ENCODE measurements at regions of chr15 and their contacts with region 1.

Region 1: DNA sequence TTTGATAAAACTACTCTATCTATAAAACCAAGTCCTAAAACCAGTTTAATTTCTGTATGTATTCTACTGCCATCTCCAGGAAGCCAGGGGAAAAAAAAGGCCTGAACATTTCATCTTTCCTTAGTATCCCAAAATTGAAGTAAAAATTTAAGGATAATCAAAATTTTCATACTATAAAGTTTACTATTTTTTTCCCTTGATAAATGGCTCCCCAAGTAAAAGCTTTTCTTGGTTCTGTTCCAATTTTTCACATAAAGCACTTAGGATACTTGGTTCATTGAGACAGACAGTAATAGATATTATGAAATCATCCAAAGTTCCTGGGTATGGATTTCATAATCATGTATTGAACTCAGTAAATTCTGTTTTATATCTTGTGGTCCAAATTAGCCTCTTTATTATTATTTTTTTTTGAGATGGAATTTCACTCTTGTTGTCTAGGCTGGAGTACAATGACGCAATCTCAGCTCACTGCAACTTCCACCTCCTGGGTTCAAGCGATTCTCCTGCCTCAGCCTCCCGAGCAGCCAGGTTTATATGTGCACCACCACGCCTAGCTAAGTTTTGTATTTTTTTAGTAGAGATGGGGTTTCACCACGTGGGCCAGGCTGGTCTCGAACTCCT is 34.5 kb downstream of the ICE2 start:
- DNase-seq: no peak
- H3K4me3 ChIP-seq: no peak overlapping the region
- H3K27ac ChIP-seq: no peak overlapping the region
- H3K27me3 ChIP-seq: no peaks in the 10 kb centered on the region
- CTCF ChIP-seq: peak; percentile 74

Region 2: DNA sequence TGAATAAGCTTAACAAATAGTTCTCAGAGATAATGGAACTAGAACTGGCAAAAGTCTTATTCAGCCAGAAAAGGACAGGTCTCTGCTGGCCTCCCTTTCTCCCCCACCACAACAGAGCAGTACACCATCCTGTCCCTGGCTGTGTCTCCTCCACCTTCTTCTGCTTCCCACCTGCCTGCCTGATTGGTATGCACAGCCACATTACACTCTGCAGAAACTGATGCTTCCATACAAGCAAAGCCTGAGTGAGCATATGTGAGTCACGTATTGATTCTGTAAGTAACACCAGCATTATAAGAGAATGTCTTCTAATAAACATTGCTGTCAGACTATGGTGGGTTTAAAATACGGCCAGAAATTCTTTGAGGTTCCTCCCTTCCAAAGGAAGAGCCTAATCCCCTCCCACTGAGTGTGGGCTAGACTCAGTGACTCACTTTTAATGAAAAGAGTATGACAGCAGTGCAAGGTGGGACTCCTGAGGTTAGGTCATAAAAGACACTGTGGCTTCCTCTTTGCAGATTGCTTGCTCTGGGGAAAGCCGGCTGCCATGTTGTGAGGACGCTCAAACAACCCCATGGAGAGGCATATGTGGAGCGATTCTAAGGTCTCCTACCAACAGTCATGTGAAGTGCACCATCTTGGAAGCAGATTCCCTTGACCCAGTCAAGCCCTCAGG is 91.0 kb before region 1 on chr15:
- CTCF ChIA-PET with region 1: interaction called, 111 read pairs
- POLR2A ChIA-PET with region 1: no interaction called
- DNase-seq: no peak
- H3K4me3 ChIP-seq: no peak overlapping the region
- H3K27ac ChIP-seq: no peak overlapping the region
- H3K27me3 ChIP-seq: no peaks in the 10 kb centered on the region
- CTCF ChIP-seq: no peak

Region 3: DNA sequence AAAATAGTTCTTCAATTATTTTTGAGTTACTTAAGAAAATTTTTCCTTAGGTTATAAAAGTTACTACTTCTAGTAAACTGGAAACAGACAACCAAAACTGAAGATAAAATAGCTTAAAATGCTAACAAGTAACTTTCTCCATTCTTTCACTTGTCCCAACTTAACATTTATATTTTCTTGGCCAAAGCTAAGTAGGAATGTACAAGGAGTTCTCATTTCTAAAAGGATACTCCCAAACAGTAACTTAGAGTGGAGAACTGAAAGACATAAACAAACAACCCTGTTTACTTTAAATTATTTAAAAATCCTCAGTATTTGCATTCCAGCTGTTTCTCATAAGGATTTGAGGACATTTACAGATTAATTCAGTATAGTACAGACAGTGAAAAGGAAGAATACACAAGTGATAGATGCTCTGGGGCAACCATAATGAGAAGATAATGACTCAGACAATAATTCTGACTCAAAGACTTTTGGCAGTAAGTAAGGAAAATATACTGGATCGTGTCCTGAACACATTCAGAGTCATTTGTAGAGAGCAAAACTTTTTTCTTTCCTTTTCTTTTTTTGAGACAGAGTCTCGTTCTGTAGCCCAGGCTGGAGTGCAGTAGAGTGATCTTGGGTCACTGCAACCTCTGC is 17.4 kb before region 1 on chr15:
- CTCF ChIA-PET with region 1: interaction called, 12 read pairs
- POLR2A ChIA-PET with region 1: no interaction called
- DNase-seq: no peak
- H3K4me3 ChIP-seq: no peak overlapping the region
- H3K27ac ChIP-seq: no peak overlapping the region
- H3K27me3 ChIP-seq: no peaks in the 10 kb centered on the region
- CTCF ChIP-seq: no peak

Region 4: GRCh38 chr15:60454824-60455223 is 10.4 kb after region 1 on chr15:
- CTCF ChIA-PET with region 1: interaction called, 10 read pairs
- POLR2A ChIA-PET with region 1: no interaction called
- DNase-seq: no peak
- H3K4me3 ChIP-seq: no peak overlapping the region
- H3K27ac ChIP-seq: no peak overlapping the region
- H3K27me3 ChIP-seq: no peaks in the 10 kb centered on the region
- CTCF ChIP-seq: no peak